GM13977 (cell line): ENCODE measurements at regions of chr10 and their contacts with region 1.

Region 1: DNA sequence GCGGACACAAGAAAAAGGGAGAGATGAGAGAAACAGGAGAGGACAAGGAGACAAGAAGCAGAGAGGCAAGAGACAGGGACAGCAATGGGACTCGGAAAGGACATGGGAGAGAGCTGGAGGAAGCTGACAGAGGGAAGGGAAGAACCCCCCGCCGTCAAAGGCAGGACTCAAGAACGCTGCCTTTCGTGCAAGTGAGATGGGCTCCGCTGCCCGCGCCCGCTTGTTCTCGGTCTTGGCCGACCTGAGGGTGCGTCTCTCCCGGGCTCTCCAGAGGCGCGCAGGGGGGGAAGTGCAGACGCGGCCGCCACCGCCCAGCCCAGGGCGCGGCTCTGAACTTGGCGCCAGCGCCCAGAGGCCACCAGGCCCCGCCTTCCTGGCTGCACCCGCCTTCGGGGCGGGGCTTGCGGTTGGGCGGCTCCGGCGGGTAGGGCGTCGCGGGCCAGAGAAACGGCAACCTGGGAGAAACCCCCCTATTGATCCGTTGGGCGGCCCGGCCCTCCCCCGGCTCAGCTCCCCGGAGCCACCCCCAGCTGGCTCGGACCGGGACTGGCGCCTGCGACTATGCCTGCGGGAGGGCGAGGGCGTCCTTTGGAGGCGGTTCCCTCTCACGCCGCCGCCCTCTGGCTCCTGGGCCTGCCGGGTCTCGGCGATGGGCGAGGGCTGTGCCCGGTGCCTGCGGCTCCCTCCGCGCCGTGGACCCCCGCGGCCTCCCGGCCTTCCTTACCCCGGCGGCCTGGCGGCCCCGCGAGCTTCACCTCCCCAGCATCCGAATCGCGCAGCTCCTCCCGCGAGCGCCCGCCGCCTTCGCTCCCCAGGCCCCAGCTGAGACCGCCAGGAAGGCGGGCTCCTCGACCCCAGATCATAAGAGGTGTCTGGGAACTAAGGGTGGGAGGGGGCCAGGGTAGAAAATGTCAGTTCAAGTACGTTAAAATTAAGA is 2.2 kb upstream of the ANTXRL start:
- DNase-seq: peak; percentile 90
- CTCF ChIP-seq: no peak

Region 2: DNA sequence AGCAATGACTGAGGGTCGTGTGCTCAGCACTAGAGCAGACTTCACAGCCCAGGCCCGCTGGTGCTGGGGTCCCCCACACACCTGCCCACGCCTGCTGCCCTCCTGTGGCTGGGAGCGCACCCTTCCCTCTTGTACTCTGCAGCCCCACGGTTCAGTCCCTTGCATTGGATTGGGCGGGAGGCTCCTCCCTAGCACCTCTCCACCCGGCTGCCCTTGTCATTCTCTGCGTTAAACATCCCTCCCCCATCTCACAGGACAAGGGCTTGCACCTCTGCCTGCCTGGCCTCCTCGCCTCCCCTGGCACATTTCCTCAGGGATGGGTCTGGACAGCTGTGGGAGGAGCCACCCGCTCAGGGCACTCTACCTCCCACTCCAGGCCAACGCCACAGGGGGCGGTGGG is 841.9 kb before region 1 on chr10:
- in situ Hi-C with region 1: no loop called
- DNase-seq: no peak
- CTCF ChIP-seq: peak; percentile 19

Region 3: DNA sequence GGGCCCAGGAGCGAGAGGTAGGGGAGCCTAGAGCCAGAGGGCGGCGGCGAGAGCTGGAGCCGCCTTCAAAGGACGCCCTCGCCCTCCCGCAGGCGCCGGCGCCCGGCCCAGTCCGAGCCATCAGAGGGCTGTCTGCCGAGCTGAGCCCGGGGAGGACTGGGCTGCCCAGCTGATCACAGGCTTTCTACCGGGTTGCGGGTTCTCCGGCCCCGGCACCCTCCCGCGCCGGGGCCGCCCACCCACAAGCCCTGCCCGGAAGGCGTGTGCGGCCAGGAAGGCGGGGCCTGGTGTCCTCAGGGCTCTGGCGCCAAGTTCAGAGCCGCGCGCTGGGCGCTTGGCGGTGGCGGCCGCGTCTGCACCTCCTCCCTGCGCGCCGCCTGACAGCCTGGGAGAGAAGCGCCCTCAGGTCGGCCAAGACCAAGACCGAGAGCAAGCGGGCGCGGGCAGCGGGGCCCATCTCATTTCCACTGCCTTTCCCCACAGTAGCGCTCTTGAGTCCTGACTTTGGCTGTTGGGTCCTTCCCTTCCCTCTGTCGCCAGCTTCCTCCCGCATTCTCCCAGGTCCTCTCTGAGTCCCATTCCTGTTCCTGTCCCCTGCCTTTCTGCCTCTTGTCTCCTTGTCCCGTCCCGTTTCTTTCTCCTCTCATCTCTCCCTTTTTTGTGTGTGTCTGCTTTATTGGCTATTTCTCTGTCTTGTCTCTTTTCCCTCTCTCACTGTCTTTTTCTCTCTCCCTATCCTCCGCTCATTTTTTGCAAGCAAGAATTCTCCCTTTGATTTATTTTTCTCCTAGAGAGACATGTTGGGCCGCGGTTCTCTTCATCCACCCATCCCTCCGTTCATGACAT is 177.9 kb before region 1 on chr10:
- in situ Hi-C with region 1: loop called (anchors 5 kb)
- DNase-seq: peak; percentile 51
- CTCF ChIP-seq: no peak

Region 4: GRCh38 chr10:47384148-47384921 is 1099.8 kb after region 1 on chr10 and contains the start of gene ZNF488:
- in situ Hi-C with region 1: loop called (anchors 25 kb)
- DNase-seq: peak; percentile 95
- CTCF ChIP-seq: no peak